Common myeloid progenitor, CD34-positive (primary cell): ENCODE measurements at regions of chr5 and their contacts with region 1.

Region 1: GRCh38 chr5:16690243-16690852 is 73.6 kb upstream of the RETREG1 start:
- DNase-seq: peak; percentile 36 to 67 (median 64)
- H3K4me3 ChIP-seq: no peak overlapping the region
- H3K27ac ChIP-seq: no peak overlapping the region
- H3K4me1 ChIP-seq: no peaks in the 10 kb centered on the region
- H3K27me3 ChIP-seq: no peaks in the 10 kb centered on the region

Region 2: GRCh38 chr5:16673241-16674201 is 16.8 kb before region 1 on chr5:
- CTCF ChIA-PET with region 1: interaction called, 12 read pairs
- POLR2A ChIA-PET with region 1: no interaction called
- DNase-seq: no peak
- H3K4me3 ChIP-seq: no peak overlapping the region
- H3K27ac ChIP-seq: no peak overlapping the region
- H3K4me1 ChIP-seq: no peaks in the 10 kb centered on the region
- H3K27me3 ChIP-seq: no peaks in the 10 kb centered on the region